Activated CD4-positive, alpha-beta memory T cell treated with anti-CD3 and anti-CD28 coated beads, Interleukin-2, amount 10 ng/mL, durations not matched to agents 7 days and 5 days (primary cell): ENCODE measurements at regions of chr2 and their contacts with region 1.

Region 1: DNA sequence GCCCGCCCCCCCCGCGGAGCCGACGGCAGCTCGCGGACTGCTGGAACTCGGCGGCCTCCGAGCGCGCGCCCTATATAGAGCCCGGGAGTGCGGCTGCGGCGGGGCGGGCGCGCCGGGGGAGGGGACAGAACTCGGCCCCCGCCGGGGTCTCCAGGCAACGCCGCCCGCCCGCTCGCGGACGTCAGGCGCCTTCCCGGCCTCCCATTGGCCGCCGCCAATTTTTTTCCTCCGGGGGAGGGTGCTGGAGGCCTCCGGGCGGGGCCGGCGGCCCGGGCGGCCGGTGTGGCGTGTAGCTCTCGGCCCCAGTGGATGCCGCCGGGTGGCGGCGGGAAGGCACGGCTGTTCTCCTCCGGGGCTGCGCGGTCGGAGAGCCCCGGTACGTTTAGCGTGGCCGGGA is at the start of gene ZFP36L2:
- DNase-seq: peak; percentile 97
- H3K4me3 Mint-ChIP-seq: peak within 1 kb of the TSS; percentile 99
- H3K27ac Mint-ChIP-seq: peak within 1 kb of the TSS; percentile 99
- H3K4me1 Mint-ChIP-seq: peaks cover 33% of the 10 kb centered on the region
- H3K27me3 Mint-ChIP-seq: no peaks in the 10 kb centered on the region
- total RNA-seq, gene ZFP36L2: 276 to 278 TPM

Region 2: DNA sequence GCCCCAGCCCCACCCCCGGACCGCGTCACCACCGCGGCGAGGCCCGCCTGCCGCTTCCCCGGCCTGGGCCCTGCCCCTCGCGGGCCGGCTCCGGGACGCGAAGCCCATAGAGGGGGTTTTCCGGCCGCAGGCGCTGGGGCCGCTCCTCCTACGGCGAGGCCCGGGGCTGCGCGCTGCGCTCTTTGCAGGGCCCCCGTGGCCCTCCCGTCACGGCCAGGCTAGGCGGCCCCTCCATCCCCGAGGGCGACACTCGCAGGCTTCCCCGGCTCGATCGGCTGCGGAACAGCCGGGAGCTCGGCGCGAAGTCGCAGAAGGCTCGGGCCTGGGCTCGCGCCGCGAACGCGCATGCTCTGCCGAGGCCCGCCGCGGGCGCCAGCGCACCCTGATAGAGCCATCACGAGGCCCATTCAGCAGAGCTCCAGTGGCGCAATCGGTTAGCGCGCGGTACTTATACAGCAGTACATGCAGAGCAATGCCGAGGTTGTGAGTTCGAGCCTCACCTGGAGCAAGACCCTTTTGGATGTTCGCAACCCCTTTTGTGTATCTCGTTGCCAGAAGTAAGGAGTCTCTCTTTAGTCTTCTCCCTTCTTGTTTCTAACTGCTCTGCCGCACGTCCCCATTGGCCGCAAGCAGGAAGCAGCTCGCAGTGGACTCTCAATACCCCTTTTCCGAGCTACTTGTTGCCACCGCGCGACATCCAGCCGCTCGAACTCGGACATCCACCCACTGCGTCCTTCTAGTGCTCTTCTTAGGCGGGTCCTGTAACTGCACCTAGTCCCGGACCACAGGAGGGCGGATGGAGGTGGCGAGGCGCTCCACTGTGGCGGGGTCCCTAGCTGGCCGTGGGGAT is 416.2 kb before region 1 on chr2:
- CTCF ChIA-PET with region 1: interaction called, 4 read pairs
- POLR2A ChIA-PET with region 1: interaction called, 22 read pairs
- DNase-seq: peak; percentile 96
- H3K4me3 Mint-ChIP-seq: peak overlapping the region; percentile 93
- H3K27ac Mint-ChIP-seq: peak overlapping the region; percentile 100
- H3K4me1 Mint-ChIP-seq: peaks cover 18% of the 10 kb centered on the region
- H3K27me3 Mint-ChIP-seq: peaks cover 7% of the 10 kb centered on the region

Region 3: DNA sequence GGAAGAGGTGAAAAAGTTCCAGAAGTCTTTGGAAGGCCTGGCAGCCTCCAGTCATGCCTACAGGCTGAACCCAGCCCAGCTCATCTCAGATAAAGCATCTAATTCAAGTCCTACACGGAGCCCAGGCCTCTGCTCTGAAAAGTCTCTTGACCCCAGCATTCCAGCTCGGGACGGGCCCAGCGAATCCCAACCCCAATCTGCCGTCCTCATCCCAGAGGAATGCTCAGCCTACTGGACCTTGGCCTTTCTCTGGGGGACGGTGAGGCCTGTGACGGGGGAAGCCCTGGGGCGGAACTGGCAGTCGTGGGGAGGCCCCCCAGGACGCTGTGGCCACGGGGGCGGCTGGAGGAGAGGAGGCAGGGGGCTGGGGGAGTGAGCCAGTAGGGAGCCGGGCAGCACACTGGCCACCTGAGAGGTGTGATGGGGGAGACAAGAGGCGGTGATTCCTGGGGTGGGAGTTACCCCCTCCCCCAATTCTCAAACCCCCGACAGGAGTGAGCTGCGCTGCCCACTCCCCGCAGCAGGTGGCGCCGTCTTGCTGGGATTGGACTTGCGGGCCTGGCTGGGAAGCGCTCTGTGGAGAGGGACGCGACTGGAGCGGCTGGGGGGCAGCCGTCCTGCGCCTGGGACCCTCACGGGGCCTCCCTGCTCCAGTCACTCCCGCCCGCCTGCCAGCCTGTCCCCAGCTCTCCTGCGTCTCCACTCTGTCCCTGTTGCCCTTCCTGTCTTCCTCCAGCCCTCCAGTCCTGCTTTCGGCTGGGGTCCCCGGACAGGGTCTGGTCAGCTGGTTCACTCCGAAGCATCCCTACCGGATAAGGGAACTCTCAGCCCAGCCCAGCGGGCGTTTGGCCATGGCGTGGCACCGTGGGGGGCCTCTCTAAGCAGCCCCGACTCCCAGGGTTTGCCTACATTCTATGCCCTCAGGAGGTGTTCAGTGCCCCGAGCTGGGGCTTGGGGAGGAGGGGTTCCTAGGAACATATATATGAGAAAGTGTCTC is 251.5 kb before region 1 on chr2:
- CTCF ChIA-PET with region 1: interaction called, 16 read pairs
- POLR2A ChIA-PET with region 1: interaction called, 3 read pairs
- DNase-seq: peak; percentile 53
- H3K4me3 Mint-ChIP-seq: no peak overlapping the region
- H3K27ac Mint-ChIP-seq: no peak overlapping the region
- H3K4me1 Mint-ChIP-seq: peaks cover 18% of the 10 kb centered on the region
- H3K27me3 Mint-ChIP-seq: peaks cover 2% of the 10 kb centered on the region

Region 4: DNA sequence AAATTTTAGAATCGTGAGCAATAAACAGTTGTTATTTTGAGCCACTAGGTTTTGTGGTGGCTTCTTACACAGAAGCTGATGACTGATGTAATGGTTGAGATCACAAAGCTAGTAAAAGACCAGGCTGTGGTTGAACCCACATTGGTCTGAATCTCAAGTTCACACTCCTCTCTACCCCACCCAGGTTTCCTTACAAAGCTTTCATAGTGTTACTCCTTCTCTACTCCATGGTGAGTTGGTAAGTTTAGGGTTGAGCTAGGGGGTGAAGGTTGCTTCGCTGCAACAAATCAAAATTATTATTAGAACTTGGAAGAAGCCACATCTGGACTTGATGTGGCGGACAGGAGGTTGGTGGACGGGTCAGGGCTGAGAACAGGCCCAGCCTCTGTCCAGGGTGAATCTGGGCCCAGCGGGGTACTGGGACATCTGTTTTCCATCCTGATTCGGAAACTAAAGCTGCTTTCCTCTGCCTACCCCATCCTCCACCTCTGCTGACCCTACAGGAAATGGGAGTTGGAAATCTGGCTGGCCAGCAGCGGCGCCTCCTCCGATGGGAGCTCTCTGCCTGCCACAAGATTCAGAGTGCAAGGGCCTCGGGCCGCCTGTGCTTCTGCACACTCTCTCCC is 86.4 kb before region 1 on chr2:
- CTCF ChIA-PET with region 1: interaction called, 316 read pairs
- POLR2A ChIA-PET with region 1: interaction called, 1,053 read pairs
- DNase-seq: peak; percentile 59
- H3K4me3 Mint-ChIP-seq: peak overlapping the region; percentile 61
- H3K27ac Mint-ChIP-seq: peak overlapping the region; percentile 92
- H3K4me1 Mint-ChIP-seq: peaks cover 71% of the 10 kb centered on the region
- H3K27me3 Mint-ChIP-seq: no peaks in the 10 kb centered on the region

Region 5: DNA sequence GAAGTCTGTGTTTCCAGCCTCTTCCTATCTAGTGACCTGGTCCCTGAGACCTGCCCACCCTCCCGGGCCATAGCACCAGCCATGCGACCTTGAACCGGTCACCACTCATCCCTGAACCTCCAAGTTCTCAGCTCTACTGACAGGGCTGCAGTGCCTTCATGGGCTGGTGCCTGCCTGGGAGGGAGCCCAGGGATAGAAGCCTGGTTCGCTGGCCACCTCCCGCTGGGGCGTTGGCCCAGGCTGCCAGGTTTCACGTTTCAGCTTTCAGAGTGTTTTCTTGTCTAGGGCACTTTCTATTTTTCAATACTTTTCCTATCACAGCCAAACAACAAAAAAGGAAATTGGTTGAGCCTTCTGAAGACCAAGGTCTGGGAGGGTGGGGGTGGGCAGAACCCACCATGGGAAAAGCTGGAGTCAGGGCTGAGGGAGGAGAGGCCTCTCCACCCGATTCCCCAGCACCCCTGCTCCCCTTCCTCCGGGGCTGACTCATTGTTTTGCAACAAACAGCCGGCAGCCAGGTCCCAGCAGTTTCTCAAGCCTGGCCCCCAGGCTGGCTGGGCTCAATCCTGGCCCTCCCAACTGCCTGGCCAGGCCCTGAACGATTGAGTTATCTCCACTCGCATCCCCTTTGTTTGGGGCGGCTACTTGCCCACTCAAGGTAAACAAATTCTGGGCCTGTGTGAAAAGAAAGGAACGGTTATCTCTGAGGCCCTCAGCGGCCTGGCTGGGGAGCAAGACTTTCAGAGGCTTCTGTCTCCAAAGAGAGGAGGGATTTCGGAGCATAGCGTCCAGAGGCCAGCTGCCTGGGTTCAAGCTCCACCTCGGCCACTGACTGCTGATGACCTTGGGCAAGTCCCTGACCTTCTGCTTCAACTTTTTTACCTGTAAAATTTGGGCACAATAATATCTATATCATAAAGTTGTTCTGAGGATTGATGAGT is 47.7 kb before region 1 on chr2:
- CTCF ChIA-PET with region 1: interaction called, 230 read pairs
- POLR2A ChIA-PET with region 1: interaction called, 403 read pairs
- DNase-seq: peak; percentile 43
- H3K4me3 Mint-ChIP-seq: no peak overlapping the region
- H3K27ac Mint-ChIP-seq: peak overlapping the region; percentile 87
- H3K4me1 Mint-ChIP-seq: peaks cover 69% of the 10 kb centered on the region
- H3K27me3 Mint-ChIP-seq: no peaks in the 10 kb centered on the region

Region 6: GRCh38 chr2:43251171-43251731 is 24.7 kb after region 1 on chr2:
- CTCF ChIA-PET with region 1: no interaction called
- POLR2A ChIA-PET with region 1: no interaction called
- DNase-seq: no peak
- H3K4me3 Mint-ChIP-seq: no peak overlapping the region
- H3K27ac Mint-ChIP-seq: no peak overlapping the region
- H3K4me1 Mint-ChIP-seq: no peaks in the 10 kb centered on the region
- H3K27me3 Mint-ChIP-seq: no peaks in the 10 kb centered on the region

Region 7: DNA sequence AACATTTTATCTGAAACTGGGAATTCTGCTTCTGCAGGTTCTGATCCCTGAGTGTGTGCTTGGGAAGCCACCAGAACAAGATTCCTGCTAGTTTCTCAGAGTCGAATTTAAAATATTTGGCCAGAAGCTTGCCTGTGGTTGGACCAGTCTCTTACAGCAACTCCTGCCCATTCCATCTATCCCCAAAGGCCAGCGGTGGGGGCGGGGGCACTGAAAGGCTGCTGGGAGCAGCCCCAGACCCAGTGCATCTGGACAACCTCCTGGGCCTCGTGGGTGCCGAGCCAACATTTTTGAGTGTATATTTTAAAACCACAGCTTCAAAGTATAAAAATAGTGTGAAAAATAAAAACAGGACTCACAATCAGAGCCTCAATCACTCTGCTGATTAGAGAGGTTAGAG is 38.4 kb after region 1 on chr2:
- CTCF ChIA-PET with region 1: no interaction called
- POLR2A ChIA-PET with region 1: no interaction called
- DNase-seq: no peak
- H3K4me3 Mint-ChIP-seq: no peak overlapping the region
- H3K27ac Mint-ChIP-seq: no peak overlapping the region
- H3K4me1 Mint-ChIP-seq: peaks cover 9% of the 10 kb centered on the region
- H3K27me3 Mint-ChIP-seq: no peaks in the 10 kb centered on the region

Region 8: DNA sequence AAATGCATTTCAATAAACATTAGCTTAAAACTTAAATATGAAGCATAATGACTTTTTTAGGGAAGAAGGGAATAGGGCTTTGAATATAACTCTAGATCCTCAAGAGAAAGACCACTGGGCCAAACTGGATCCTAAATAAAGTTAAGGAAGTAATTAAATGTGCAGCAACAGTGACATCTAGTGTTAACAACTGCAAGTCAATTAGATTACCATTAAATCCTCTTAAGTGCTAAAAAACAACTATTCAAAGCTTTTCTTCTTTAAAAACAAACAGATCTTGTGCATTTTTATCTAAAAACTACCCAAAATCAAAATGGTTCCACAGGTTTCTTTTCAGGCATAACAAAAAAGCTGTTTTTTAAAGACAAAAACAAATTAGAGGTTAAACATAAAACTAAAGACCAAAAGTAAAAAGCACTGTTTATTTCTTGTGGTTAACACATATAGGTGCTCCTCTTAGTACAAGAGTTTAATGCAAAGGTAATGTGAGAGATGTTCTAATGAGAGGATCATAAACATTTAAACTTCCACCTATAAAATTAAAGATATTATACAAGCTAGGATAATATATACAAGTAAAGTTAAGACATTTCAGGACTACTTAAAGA is 257.9 kb after region 1 on chr2:
- CTCF ChIA-PET with region 1: interaction called, 68 read pairs
- POLR2A ChIA-PET with region 1: interaction called, 15 read pairs
- DNase-seq: no peak
- H3K4me3 Mint-ChIP-seq: no peak overlapping the region
- H3K27ac Mint-ChIP-seq: no peak overlapping the region
- H3K4me1 Mint-ChIP-seq: peaks cover 45% of the 10 kb centered on the region
- H3K27me3 Mint-ChIP-seq: no peaks in the 10 kb centered on the region

Region 9: DNA sequence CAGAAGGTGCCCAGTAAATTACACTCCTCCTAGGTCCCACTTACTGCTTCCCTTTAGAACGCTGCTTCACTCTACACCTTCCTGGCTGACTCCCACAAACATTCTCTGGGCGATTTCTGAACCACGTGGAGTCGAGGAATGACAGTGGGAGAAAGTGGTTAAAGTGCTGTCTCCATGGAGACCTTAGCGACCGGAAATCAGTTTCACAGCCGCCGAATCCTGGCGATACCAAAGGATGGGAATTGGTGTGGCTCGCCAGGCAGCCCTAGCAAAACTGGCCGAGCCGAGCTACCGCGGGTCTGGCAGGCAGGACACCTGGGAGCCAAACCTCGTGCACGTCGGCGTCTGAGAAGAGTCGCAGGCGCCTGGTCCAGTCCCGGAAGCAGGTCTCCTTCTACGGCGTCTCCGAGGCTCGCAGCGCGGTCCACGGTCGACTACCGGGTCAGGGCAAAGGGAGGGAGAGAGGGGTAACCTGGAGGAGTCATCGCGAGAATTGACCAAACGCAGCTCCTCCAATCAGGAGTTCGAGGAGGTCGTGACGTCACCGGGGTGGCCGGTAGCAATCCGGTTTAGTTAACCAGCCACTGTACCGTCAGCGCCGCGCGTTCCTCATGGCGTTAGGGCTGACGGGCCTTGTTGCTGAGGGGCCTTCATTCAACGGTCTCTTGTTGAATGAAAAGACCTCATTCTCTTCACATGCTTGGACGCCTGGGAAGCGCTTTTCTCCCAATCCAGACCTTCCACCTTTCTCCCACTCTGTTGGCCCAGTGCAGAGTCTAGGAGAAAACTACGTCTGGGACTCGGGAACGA is 369.3 kb after region 1 on chr2 and contains the start of gene THADA:
- CTCF ChIA-PET with region 1: interaction called, 3 read pairs
- POLR2A ChIA-PET with region 1: interaction called, 14 read pairs
- DNase-seq: peak; percentile 99
- H3K4me3 Mint-ChIP-seq: peak within 1 kb of the TSS; percentile 95
- H3K27ac Mint-ChIP-seq: peak within 1 kb of the TSS; percentile 94
- H3K4me1 Mint-ChIP-seq: peaks cover 33% of the 10 kb centered on the region
- H3K27me3 Mint-ChIP-seq: no peaks in the 10 kb centered on the region
- total RNA-seq, gene THADA: 21.6 to 25.8 TPM